ENCODE measurements at regions of chr4 and their contacts with region 1.

Region 1: DNA sequence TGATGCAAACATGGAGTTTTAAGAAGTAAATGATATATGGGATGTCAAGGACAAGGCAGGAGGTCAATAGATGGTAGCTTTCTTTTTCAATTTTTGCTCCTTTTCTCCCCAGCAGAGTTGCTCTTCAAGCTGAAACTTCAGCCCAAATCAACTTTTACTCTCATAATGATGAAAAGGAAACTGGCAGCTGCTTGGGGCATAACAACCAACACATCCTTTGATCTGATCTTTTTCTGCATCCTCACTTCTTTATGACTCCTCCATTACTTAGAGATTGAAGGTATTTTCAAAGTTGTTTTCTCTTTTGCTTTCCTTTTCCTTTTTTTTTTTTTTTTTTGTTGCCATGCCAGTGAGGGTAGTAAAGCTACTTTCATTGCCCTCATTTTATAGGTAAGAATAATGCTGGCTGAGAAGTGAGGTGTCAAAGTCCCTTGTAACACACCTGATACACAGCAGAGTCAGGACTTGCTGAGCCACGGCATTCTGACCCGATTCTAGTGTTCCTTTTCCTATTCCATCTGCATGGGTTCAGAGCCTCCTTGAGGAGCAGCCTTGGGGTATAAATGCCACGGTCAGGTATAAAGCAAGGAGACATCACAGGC is 26.9 kb downstream of the SLC2A9 start:
- DNase-seq: no peak
- ATAC-seq: no peak

Region 2: DNA sequence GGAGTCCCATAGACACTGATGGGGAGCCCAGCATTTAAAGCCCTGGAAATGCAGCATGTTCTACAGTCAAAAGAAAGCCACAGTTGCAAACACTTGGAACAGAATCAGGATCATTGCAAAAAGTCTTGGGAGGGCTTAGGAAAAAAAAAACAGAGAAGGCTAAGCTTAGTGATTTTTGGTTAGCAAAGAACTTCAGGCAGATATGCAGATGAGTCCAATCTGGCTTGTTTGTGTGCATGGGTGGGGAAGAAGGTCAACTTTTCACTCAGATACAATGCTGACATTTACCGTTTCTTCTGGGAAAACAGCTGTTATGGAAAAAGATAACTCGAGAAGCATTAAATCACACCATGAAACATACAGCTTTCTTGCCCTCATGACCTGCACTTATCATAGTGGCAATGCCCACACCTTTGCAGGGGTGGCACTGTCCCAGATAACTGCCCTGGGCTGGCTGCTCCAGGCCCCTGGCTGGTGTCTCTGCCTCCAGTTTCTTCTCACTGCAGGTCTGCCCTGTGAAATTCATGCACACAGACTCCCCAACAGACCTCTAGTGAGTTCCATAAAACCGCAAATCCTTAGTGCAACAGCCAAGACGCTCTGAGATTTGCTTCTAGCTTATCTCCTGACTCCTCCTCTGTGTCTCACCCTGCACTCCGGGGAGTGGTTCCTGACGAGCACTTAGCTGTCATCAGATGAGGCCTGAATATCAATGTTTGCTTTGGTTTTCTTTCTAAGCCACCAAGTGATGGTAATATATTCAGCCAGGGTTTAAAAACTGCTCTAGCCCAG is 113.7 kb before region 1 on chr4:
- intact Hi-C with region 1: no loop called
- DNase-seq: no peak
- ATAC-seq: peak; percentile 86

Region 3: GRCh38 chr4:9904976-9905587 is 89.3 kb before region 1 on chr4:
- intact Hi-C with region 1: loop called (anchors 5 kb)
- DNase-seq: no peak
- ATAC-seq: peak; percentile 60

Region 4: GRCh38 chr4:9919047-9919446 is 75.3 kb before region 1 on chr4:
- intact Hi-C with region 1: loop called (anchors 5 kb)
- DNase-seq: no peak
- ATAC-seq: peak; percentile 17

Region 5: GRCh38 chr4:9944431-9945425 is 49.6 kb before region 1 on chr4:
- intact Hi-C with region 1: loop called (anchors 5 kb)
- DNase-seq: no peak
- ATAC-seq: no peak